ENCODE measurements at regions of chrX and their contacts with region 1.

Region 1: DNA sequence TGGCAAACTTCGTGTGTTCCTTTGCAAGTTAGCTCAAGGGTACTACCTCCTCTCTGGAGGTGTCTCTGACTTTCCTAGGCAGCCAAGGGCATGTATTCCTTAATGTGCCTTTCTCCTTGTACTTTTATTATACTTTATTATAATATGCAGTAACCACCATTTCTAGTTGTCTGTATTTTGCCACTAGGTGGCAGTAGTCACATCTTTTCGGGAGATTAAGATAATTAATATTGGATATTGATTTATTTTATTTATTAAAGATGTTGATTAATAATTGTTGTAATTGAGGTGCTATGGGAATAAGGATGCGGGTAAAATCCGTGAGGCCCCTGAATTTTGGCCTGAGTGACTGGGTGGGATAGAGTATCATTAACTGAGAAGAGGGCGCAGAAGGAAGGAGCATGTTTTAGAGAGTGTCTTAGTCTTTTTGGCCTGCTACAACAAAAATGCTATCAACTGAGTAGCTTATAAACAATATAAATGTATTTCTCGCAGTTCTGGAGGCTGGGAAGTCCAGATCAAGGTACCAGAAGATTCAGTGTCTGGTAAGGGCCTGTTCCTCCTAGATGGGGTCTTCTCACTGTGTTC is 153.3 kb downstream of the TMEM164 start:
- DNase-seq: peak in 3 of 14 experiments; percentile 13 to 40 (median 29)
- ATAC-seq: no peak
- H3K4me3 ChIP-seq: no peak overlapping the region
- H3K4me3 Mint-ChIP-seq: no peak overlapping the region
- H3K27ac ChIP-seq: no peak overlapping the region
- H3K27ac Mint-ChIP-seq: no peak overlapping the region
- H3K4me1 ChIP-seq: peaks cover 6% of the 10 kb centered on the region
- H3K4me1 Mint-ChIP-seq: peaks cover 10% of the 10 kb centered on the region
- H3K27me3 ChIP-seq: no peaks in the 10 kb centered on the region
- H3K27me3 Mint-ChIP-seq: no peaks in the 10 kb centered on the region
- CTCF ChIP-seq: peak; percentile 64

Region 2: DNA sequence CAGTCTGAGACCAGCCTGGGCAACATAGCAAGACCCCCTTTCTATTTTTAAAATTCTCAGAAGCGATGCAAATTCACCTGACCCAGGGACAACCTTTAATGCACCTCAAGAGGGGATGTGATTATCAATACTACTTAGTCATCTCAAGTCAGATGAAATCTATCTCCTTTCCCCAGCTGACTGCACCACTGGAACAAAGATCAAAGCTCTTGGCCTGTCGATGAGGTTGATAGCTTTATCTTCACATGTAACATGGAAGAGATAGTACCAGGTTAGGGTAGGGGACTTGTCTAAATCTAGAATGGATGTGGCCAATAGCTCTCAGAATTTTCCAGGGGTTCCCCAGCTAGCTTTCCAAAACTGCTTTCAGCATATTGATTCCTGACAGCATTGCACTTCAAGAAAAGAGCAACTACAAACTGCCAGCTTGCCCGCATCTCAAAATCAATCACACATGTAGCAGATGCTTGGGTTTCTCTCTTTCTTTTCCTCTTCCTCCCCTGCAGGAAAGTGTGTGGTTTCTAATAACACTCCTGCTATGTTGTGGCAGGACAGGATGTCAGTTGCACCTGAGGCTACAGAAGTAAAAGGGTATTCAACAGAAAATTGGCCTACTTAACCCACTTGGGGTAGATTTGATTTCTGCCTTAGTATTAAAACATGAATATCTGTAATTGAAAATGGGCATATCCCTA is 165.5 kb before region 1 on chrX:
- CTCF ChIA-PET with region 1: no interaction called
- POLR2A ChIA-PET with region 1: no interaction called
- intact Hi-C with region 1: no loop called
- DNase-seq: peak in 2 of 14 experiments; percentile 11 to 42
- ATAC-seq: no peak
- H3K4me3 ChIP-seq: no peak overlapping the region
- H3K4me3 Mint-ChIP-seq: peak overlapping the region; percentile 3
- H3K27ac ChIP-seq: no peak overlapping the region
- H3K27ac Mint-ChIP-seq: peak overlapping the region; percentile 15
- H3K4me1 ChIP-seq: peaks cover 15% of the 10 kb centered on the region
- H3K4me1 Mint-ChIP-seq: peaks cover 33% of the 10 kb centered on the region
- H3K27me3 ChIP-seq: no peaks in the 10 kb centered on the region
- H3K27me3 Mint-ChIP-seq: no peaks in the 10 kb centered on the region
- CTCF ChIP-seq: no peak

Region 3: GRCh38 chrX:110210417-110211139 is 54.3 kb after region 1 on chrX:
- CTCF ChIA-PET with region 1: no interaction called
- POLR2A ChIA-PET with region 1: no interaction called
- intact Hi-C with region 1: no loop called
- DNase-seq: no peak
- ATAC-seq: no peak
- H3K4me3 ChIP-seq: no peak overlapping the region
- H3K4me3 Mint-ChIP-seq: no peak overlapping the region
- H3K27ac ChIP-seq: no peak overlapping the region
- H3K27ac Mint-ChIP-seq: no peak overlapping the region
- H3K4me1 ChIP-seq: no peaks in the 10 kb centered on the region
- H3K4me1 Mint-ChIP-seq: peaks cover 13% of the 10 kb centered on the region
- H3K27me3 ChIP-seq: no peaks in the 10 kb centered on the region
- H3K27me3 Mint-ChIP-seq: no peaks in the 10 kb centered on the region
- CTCF ChIP-seq: no peak

Region 4: GRCh38 chrX:110407910-110408545 is 251.8 kb after region 1 on chrX:
- CTCF ChIA-PET with region 1: interaction called, 14 read pairs
- POLR2A ChIA-PET with region 1: interaction called, 3 read pairs
- intact Hi-C with region 1: loop called (anchors 1 kb)
- DNase-seq: peak in 11 of 14 experiments; percentile 3 to 70 (median 24)
- ATAC-seq: no peak
- H3K4me3 ChIP-seq: no peak overlapping the region
- H3K4me3 Mint-ChIP-seq: no peak overlapping the region
- H3K27ac ChIP-seq: no peak overlapping the region
- H3K27ac Mint-ChIP-seq: no peak overlapping the region
- H3K4me1 ChIP-seq: peaks cover 2% of the 10 kb centered on the region
- H3K4me1 Mint-ChIP-seq: no peaks in the 10 kb centered on the region
- H3K27me3 ChIP-seq: no peaks in the 10 kb centered on the region
- H3K27me3 Mint-ChIP-seq: no peaks in the 10 kb centered on the region
- CTCF ChIP-seq: peak; percentile 67

Region 5: DNA sequence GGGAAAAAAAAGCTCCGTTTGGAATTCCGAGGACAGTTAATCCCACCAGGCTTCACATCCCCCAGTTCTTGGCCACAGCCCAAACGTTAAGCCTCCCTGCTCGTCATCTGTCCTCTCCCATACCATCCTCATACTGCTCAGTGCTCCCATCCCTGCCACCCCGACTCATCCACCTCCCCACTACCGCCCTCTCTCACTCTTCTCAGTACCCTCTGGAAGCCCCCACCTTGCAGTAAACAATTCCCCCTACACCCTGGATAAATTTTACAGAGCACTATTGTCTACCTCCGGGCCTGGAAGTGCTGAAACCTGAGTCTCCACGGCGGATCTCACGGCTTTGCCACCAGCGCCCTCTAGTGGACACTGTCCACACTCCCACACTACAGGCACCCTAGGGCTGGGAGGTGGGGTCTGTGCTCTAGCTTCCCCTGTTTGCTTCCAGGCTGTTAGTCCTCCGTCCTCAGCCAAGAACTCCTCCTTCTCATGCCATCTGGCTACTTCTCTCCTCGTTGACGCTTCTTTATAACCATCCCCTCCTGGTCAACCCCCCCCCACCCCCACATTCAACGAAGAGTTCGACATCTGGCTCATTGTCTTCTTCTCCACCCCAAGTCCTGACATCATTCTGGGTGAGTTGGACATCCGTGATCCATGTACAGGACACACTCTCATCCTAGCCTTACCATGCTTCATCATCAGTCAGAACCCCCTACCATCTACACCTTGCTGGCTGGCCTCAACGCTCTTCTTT is 256.9 kb after region 1 on chrX:
- CTCF ChIA-PET with region 1: interaction called, 14 read pairs
- POLR2A ChIA-PET with region 1: no interaction called
- intact Hi-C with region 1: loop called (anchors 1 kb)
- DNase-seq: peak; percentile 41 to 80 (median 60)
- ATAC-seq: peak; percentile 89
- H3K4me3 ChIP-seq: no peak overlapping the region
- H3K4me3 Mint-ChIP-seq: no peak overlapping the region
- H3K27ac ChIP-seq: no peak overlapping the region
- H3K27ac Mint-ChIP-seq: no peak overlapping the region
- H3K4me1 ChIP-seq: peaks cover 2% of the 10 kb centered on the region
- H3K4me1 Mint-ChIP-seq: no peaks in the 10 kb centered on the region
- H3K27me3 ChIP-seq: no peaks in the 10 kb centered on the region
- H3K27me3 Mint-ChIP-seq: no peaks in the 10 kb centered on the region
- CTCF ChIP-seq: peak; percentile 69

Region 6: GRCh38 chrX:110531873-110532580 is 375.8 kb after region 1 on chrX:
- CTCF ChIA-PET with region 1: no interaction called
- POLR2A ChIA-PET with region 1: no interaction called
- intact Hi-C with region 1: no loop called
- DNase-seq: no peak
- ATAC-seq: no peak
- H3K4me3 ChIP-seq: no peak overlapping the region
- H3K4me3 Mint-ChIP-seq: no peak overlapping the region
- H3K27ac ChIP-seq: no peak overlapping the region
- H3K27ac Mint-ChIP-seq: no peak overlapping the region
- H3K4me1 ChIP-seq: no peaks in the 10 kb centered on the region
- H3K4me1 Mint-ChIP-seq: no peaks in the 10 kb centered on the region
- H3K27me3 ChIP-seq: no peaks in the 10 kb centered on the region
- H3K27me3 Mint-ChIP-seq: no peaks in the 10 kb centered on the region
- CTCF ChIP-seq: no peak

Measured in CD4-positive, alpha-beta T cell (primary cell).